ENCODE measurements at regions of chr9 and their contacts with region 1.

Region 1: DNA sequence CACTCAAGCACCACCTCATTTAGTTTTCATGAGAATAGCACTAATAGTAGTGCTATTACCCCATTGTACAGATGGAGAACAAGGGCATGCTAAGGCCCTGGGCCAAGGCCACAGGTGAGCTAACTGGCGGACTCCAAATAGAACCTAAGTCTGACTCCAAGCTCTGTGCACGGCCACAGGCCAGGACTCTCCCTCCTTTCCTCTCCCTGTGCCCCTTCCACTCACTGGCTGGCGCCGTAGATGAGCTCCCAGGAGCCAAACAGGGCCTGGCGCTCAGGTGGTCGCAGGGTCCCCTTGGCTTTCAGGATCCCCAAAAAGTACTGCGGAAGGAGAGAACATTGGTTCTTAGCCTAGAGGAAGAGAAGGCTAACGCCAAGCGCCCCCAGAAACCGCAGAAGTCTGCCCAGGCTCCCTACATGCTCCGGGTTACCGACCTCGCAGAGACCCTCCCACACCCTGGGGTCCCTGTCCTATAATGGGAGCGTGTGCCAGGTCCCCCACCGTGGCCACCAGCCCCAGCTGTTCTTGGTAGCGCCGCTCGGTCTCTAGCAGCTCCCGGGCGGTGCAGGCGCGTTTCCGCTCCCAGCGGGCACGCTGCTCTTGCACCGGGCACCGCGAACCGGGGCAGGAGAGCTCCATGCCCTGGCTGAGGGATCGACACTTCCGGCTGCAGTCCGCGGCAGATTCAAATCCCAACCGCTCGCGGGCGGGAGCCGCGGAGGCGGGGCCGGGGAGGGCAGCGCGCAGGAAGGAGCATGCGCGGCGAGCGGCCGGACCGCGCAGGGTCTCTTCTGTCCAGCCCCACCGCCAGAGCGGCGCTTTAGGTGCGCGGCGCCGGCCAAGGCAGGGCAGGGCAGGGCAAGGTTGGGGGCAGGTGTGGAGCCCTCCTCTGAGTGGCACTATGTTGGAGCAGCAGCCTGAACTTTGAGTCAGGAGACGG is at the start of gene ARHGEF39:
- DNase-seq: peak; percentile 91
- ATAC-seq: peak; percentile 97
- H3K4me3 Mint-ChIP-seq: peak within 1 kb of the TSS; percentile 81
- H3K27ac Mint-ChIP-seq: peak within 1 kb of the TSS; percentile 71; the same call in 1 of the 2 replicates
- H3K4me1 Mint-ChIP-seq: peaks cover 24% of the 10 kb centered on the region
- H3K27me3 Mint-ChIP-seq: no peaks in the 10 kb centered on the region; the same call in 1 of the 2 replicates
- CTCF ChIP-seq: no peak
- total RNA-seq, gene ARHGEF39: 23.8 to 26.6 TPM (median 26.5 TPM) in 3 replicates

Region 2: DNA sequence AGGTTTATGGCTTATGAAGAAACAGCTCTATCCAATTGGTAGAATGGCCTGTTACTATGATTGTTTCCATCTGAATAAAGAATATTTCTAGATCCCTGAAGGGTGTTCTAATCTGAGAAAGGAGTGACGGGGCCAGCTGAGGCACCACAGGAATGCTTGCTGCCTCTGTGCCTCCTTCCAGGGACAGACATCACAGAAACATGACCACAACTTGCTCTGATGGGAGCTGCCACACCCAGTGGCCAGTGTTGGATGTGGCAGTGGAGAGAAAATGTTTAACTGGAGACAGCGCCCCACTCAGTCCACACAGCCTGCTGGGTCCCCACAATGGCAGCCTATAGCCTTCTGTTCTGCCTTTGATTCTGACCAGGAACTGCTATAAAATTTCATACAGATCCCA is 98.4 kb before region 1 on chr9:
- CTCF ChIA-PET with region 1: no interaction called
- POLR2A ChIA-PET with region 1: no interaction called
- DNase-seq: no peak
- ATAC-seq: no peak; the same call in 1 of the 2 replicates
- H3K4me3 Mint-ChIP-seq: no peak overlapping the region
- H3K27ac Mint-ChIP-seq: no peak overlapping the region
- H3K4me1 Mint-ChIP-seq: peaks cover 9% of the 10 kb centered on the region
- H3K27me3 Mint-ChIP-seq: no peaks in the 10 kb centered on the region; the same call in 1 of the 2 replicates
- CTCF ChIP-seq: no peak

Region 3: GRCh38 chr9:35603987-35604577 is 60.7 kb before region 1 on chr9:
- CTCF ChIA-PET with region 1: interaction called, 13 read pairs
- POLR2A ChIA-PET with region 1: no interaction called
- DNase-seq: peak; percentile 99
- ATAC-seq: peak; percentile 89
- H3K4me3 Mint-ChIP-seq: peak overlapping the region; percentile 99
- H3K27ac Mint-ChIP-seq: peak overlapping the region; percentile 100
- H3K4me1 Mint-ChIP-seq: peaks cover 25% of the 10 kb centered on the region
- H3K27me3 Mint-ChIP-seq: peaks cover 5% of the 10 kb centered on the region
- CTCF ChIP-seq: peak; percentile 83

Region 4: GRCh38 chr9:35611230-35611797 is 53.5 kb before region 1 on chr9:
- CTCF ChIA-PET with region 1: interaction called, 18 read pairs
- POLR2A ChIA-PET with region 1: no interaction called
- DNase-seq: peak; percentile 63
- ATAC-seq: peak; percentile 87
- H3K4me3 Mint-ChIP-seq: no peak overlapping the region
- H3K27ac Mint-ChIP-seq: no peak overlapping the region
- H3K4me1 Mint-ChIP-seq: peaks cover 9% of the 10 kb centered on the region
- H3K27me3 Mint-ChIP-seq: peaks cover 36% of the 10 kb centered on the region
- CTCF ChIP-seq: peak; percentile 52

Region 5: GRCh38 chr9:35616681-35617459 is 47.9 kb before region 1 on chr9:
- CTCF ChIA-PET with region 1: interaction called, 18 read pairs
- POLR2A ChIA-PET with region 1: interaction called, 3 read pairs
- DNase-seq: peak; percentile 66
- ATAC-seq: peak; percentile 80
- H3K4me3 Mint-ChIP-seq: peak overlapping the region; percentile 73
- H3K27ac Mint-ChIP-seq: no peak overlapping the region
- H3K4me1 Mint-ChIP-seq: peaks cover 9% of the 10 kb centered on the region
- H3K27me3 Mint-ChIP-seq: peaks cover 66% of the 10 kb centered on the region
- CTCF ChIP-seq: no peak

Region 6: GRCh38 chr9:35675732-35676392 is 11.1 kb after region 1 on chr9:
- CTCF ChIA-PET with region 1: interaction called, 41 read pairs
- POLR2A ChIA-PET with region 1: interaction called, 11 read pairs
- DNase-seq: peak; percentile 95
- ATAC-seq: peak; percentile 92
- H3K4me3 Mint-ChIP-seq: peak overlapping the region; percentile 69
- H3K27ac Mint-ChIP-seq: no peak overlapping the region
- H3K4me1 Mint-ChIP-seq: peaks cover 15% of the 10 kb centered on the region
- H3K27me3 Mint-ChIP-seq: peaks cover 30% of the 10 kb centered on the region
- CTCF ChIP-seq: no peak

Region 7: DNA sequence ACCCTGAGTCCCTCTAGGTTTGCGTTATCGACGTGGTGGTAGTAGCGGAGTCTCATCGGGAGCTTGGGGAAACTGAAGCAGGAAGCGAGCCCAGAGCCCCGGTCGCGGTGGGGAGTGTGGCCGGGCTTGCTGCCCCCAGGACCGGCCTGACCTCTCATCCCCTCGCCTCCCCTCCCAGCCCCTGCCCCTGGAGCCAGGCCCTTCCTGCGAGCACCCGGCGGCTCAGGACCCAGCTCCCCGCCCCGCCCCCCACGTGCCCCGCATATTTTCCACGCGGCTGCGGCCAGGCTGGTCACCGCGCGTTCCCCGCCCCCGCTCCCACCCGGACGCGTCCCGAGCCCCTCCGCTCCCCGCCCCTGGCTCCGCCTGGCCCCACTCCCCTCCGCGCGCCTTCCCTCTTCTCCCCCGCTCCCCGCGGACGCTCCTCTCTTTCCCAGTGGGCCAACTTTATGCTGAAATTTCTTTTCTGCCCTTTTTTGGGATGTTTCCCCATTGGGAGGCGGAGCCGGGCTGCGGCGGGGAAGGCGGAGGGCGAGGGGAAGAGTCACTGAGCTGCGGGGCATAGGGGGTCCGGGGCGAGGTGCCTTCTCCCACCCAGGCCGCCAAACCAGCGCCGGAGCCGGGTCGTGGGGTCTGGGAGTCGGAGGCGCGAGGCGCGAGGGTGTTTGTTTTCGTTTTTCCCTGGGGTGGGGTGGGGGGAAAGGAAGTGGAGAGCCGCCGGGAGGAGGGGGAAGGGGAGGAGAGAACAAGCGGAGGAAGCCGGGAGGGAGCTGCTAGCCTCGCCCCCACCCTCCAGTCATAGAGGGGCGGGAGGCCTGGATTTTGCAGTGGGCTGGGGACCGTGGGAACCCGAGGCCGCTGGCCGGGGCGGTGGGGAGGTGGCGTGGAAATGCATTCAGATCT is 25.9 kb after region 1 on chr9:
- CTCF ChIA-PET with region 1: interaction called, 127 read pairs
- POLR2A ChIA-PET with region 1: interaction called, 38 read pairs
- DNase-seq: peak; percentile 64
- ATAC-seq: peak; percentile 40
- H3K4me3 Mint-ChIP-seq: peak overlapping the region; percentile 91
- H3K27ac Mint-ChIP-seq: no peak overlapping the region
- H3K4me1 Mint-ChIP-seq: peaks cover 23% of the 10 kb centered on the region
- H3K27me3 Mint-ChIP-seq: no peaks in the 10 kb centered on the region
- CTCF ChIP-seq: no peak

Region 8: GRCh38 chr9:35756275-35757225 is 91.7 kb after region 1 on chr9:
- CTCF ChIA-PET with region 1: interaction called, 10 read pairs
- POLR2A ChIA-PET with region 1: no interaction called
- DNase-seq: peak; percentile 82
- ATAC-seq: peak; percentile 79
- H3K4me3 Mint-ChIP-seq: peak overlapping the region; percentile 89
- H3K27ac Mint-ChIP-seq: peak overlapping the region; percentile 93
- H3K4me1 Mint-ChIP-seq: peaks cover 26% of the 10 kb centered on the region
- H3K27me3 Mint-ChIP-seq: no peaks in the 10 kb centered on the region
- CTCF ChIP-seq: 0 out of 2 replicates have a peak, but pooled peaks have one; percentile 18